Cardiac septum (tissue), 1 donor: ENCODE measurements at regions of chr1 and their contacts with region 1.

Region 1: GRCh38 chr1:230909974-230910754 is 41.8 kb upstream of the C1orf198 start:
- DNase-seq: no peak

Region 2: GRCh38 chr1:230878591-230878990 is 31.6 kb before region 1 on chr1:
- intact Hi-C with region 1: loop called (anchors 5 kb)
- DNase-seq: no peak